Heart right ventricle (tissue), 16 donors: ENCODE measurements at regions of chr12 and their contacts with region 1.

Region 1: DNA sequence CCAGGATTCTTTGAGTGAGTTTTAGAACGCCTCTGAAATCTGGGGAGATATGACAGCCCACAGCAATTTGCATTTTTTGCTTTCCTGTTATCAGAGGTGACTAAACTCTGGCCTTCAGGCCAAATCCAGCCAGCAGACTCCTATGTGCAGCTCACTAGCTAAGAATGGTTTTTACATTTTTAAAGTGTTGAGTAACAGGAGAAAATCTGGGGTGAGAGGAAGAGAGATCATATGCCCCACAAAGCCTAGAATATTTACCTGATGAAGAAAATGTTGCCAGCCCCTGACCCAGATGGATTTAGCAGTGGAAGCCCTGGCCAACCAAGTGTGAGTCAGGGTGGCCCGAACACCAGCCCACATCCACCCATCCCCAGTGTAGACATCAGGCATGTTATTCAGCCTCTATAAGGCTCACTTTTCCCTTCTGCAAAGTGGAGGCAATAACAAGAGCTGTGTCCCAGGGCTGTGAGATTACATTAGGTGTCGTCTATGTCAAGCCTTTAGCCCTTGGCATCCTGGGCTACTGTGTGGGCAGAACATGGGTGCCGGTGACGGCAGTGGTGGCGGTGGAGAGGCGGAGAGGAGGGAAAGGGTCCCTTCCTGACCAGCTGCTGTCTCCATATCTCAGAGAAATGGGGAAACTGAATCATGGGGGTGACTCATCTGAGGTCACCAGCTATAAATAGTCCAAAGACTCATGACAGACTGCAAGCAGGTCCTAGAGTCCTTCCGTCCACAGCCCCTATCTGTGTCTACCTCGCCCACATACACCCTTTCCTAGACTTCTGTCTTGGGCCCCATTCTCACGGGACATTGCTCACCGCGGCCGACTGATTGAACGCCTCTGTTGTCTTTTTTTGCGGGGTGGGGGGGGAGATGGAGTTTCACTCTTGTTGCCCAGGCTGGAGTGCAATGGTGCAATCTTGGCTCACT is 32.6 kb upstream of the CD9 start:
- DNase-seq: peak in 1 of 2 donors; percentile 80
- ATAC-seq: peak; percentile 53 to 92 (median 78)
- H3K4me3 ChIP-seq: no peak overlapping the region
- H3K27ac ChIP-seq: peak overlapping the region; percentile 3 to 90 (median 78)
- H3K4me1 ChIP-seq: peaks cover 12 to 55% (median 39%) of the 10 kb centered on the region in 9 donors
- H3K27me3 ChIP-seq: no peaks in the 10 kb centered on the region
- CTCF ChIP-seq: no peak

Region 2: DNA sequence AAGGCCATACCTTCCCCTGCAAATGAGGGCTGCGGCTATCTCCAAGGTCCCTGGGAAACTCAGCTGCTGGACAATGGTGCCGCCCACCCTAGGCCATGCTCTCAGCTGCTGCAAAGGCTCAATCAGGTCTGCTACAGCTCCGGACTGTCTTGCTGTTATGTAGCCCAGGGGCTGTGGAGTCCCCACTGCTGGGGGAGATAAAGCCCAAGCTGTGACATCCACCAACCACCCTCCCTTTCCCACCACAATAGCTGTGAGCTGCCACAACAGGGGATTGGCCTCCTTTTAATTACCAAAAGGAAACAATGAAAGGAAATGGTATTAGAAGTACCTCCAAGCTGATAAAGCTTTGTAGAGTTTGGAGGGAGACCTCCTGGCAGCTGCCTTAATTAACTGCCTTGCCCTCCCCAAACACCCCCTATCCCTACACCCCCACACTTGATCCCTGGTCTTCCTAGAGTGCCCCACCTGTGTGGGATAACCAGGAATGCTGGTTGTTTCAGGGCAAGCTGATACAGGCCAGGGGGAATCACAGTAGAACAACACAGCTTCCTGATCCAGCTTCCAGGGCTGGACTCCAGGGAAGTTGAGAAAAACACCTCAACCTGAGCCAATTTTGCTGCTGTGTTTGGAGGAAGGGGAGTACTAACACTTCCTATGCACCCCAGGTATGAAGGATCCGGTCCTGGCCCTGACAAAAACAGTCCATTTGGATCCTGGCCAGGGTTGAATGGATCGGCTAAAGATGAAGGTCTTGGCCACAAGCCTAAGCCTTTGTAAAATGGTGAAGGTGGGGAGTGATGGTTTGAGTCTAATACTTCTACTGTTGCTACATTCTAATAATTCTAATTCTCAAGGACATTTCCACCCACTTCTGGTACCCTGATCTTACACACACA is 42.9 kb before region 1 on chr12 and contains the start of gene VWF:
- intact Hi-C with region 1: loop called in 4 of 10 experiments (anchors 5 kb)
- DNase-seq: peak in 1 of 2 donors; percentile 77
- ATAC-seq: peak; percentile 65 to 84 (median 78)
- H3K4me3 ChIP-seq: peak within 1 kb of the TSS; percentile 38 to 64 (median 51)
- H3K27ac ChIP-seq: peak within 1 kb of the TSS; percentile 84 to 91 (median 89)
- H3K4me1 ChIP-seq: peaks cover 0 to 22% (median 4%) of the 10 kb centered on the region in 9 donors
- H3K27me3 ChIP-seq: peaks cover 0 to 7% (median 0%) of the 10 kb centered on the region in 7 donors
- CTCF ChIP-seq: no peak
- total RNA-seq, gene VWF: 163 to 480 (median 275) TPM